ENCODE measurements at regions of chr11 and their contacts with region 1.

Region 1: DNA sequence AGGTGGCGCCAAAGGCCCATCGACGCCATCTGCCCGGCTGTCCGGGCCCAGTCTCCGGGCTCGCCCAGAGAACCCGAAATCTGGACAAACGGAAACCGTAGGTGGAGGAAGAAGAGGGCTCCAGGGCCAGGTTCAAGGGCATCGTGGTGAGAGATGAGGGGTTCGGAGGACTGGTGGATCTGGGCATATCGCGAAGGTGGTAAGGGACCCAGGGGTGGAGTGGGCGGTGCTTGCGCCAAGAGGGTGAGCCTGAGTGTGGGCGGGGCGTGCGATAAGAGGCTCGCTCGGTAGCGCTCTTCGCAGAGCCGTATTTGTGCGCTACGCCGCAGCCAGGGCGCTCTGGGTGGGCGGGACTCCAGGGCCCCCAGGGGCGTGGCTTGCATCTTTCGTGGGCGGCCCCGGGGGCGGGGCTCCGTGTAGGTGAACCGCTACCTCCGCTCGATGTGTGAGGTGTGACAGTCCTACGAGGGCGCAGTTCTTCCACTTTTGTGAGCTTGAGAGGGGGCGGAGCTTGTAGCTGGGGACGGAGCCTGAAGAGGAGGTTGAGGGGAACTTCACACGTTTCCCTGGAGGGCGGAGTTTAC is 4.8 kb downstream of the CD248 start:
- DNase-seq: peak; percentile 78
- ATAC-seq: peak; percentile 93
- H3K4me3 ChIP-seq: peak overlapping the region; percentile 66
- H3K27ac ChIP-seq: peak overlapping the region; percentile 55; the same call in 1 of the 2 replicates
- H3K4me1 ChIP-seq: no peaks in the 10 kb centered on the region; the same call in 1 of the 2 replicates
- H3K27me3 ChIP-seq: no peaks in the 10 kb centered on the region; a peak in 1 of 4 replicates
- CTCF ChIP-seq: peak in 2 of 3 experiments; percentile 91 to 94; a peak in 4 of 6 replicates
- EP300 ChIP-seq: no peak
- POLR2A ChIP-seq: peak; percentile 56; the same call in 1 of the 2 replicates
- RAD21 ChIP-seq: peak; percentile 94

Region 2: DNA sequence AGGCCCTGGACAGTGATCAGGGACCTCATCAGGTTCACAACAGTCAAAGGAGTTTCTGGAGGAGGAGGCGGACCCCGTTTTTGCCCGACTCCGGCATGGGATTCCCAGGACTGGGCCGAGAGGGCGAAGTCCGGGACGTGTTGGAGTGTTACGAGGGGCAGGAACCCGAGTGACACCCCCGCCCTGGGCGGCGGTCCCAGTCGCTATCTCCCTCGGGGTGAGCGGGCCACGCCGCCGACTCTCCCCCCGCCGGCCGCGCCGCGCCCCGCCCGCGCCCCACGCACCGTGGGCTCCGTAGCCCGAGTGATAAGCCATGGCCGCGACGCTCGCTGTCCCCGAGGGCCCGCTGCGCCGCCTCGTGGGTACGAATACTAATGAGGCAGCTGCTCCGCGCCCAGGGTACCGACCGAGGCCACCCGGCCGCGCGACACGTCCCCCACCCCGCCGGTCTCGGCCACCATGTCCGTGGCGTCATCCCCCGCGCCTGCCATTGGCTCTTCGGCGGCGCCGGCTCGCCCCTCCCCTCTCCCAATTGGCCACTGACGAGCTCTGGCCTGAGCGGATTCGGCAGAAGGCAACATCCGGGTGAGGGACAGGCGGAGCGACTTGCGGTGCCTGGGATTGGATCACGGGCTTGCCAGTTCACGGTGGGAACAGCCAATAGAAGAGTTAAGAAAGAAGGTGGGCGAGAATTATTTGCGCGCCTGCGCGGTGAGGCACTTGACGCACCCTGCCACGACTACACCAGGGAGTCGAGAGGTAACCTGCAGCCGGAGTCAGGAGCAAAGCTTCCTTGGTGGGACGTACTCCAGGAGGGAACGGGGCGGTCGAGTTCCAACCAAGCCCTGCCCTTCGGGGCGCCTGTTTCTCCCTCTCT is 23.1 kb before region 1 on chr11 and contains the start of gene YIF1A:
- CTCF ChIA-PET with region 1: interaction called, 21 read pairs
- POLR2A ChIA-PET with region 1: interaction called, 14 read pairs
- RAD21 ChIA-PET with region 1: interaction called, 28 read pairs
- SMC1A ChIA-PET with region 1: interaction called, 10 read pairs
- in situ Hi-C with region 1: no loop called
- intact Hi-C with region 1: no loop called
- DNase-seq: peak; percentile 98
- ATAC-seq: peak; percentile 97
- H3K4me3 ChIP-seq: peak within 1 kb of the TSS; percentile 83
- H3K27ac ChIP-seq: peak within 1 kb of the TSS; percentile 87
- H3K4me1 ChIP-seq: peaks cover 15% of the 10 kb centered on the region
- H3K27me3 ChIP-seq: peaks cover 2 to 7% of the 10 kb centered on the region in 2 experiments; a peak in 2 of 4 replicates
- CTCF ChIP-seq: peak in 1 of 3 experiments; percentile 16; a peak in 2 of 6 replicates
- EP300 ChIP-seq: no peak
- POLR2A ChIP-seq: peak; percentile 90
- RAD21 ChIP-seq: no peak
- polyA plus RNA-seq, gene YIF1A: 6.6 to 17.5 TPM

Region 3: DNA sequence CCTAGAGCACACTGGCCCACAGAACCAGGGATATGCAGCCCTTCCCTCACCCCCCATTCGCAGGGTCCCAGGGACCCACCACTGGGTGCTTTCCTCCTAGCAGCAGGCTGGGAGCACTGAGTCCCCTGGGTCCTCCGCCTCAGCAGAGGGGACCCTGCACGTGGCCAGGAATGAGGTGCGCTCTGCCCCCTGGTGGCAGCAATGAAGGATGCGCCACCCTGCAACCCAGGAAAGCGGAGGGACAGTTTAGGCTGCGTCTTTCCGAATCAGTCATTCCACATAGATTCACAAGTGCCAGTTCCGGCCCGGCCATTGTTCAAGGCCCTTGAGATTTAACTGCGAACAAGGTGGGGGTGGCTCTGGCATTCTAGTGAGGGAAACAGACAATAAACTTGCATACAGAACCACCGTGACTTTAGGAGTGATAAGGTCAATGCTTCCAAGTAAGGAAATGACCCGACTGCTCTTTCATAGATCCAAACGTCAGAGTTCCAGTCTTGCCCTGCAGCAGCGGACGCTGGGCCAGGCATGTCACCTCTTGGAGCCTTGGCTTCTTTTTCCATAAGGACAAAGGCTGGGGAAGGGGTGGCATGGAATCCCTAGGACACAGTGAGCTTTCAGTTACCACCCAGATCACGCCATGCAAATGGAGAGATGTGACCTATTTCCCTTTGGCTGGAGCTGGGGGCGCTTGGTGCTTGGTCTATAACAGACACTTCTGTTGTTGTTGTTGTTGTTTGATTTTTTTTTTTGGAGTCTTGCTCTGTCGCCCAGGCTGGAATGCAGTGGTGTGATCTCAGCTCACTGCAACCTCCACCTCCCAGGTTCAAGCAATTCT is 16.5 kb after region 1 on chr11:
- CTCF ChIA-PET with region 1: interaction called, 96 read pairs
- POLR2A ChIA-PET with region 1: interaction called, 4 read pairs
- RAD21 ChIA-PET with region 1: interaction called, 49 read pairs
- SMC1A ChIA-PET with region 1: interaction called, 33 read pairs
- in situ Hi-C with region 1: no loop called
- intact Hi-C with region 1: loop called (anchors 1 kb)
- DNase-seq: no peak
- ATAC-seq: peak; percentile 97
- H3K4me3 ChIP-seq: no peak overlapping the region
- H3K27ac ChIP-seq: no peak overlapping the region
- H3K4me1 ChIP-seq: peaks cover 10% of the 10 kb centered on the region; the same call in 1 of the 2 replicates
- H3K27me3 ChIP-seq: no peaks in the 10 kb centered on the region; a peak in 1 of 4 replicates
- CTCF ChIP-seq: peak; percentile 91 to 94 (median 92)
- EP300 ChIP-seq: no peak
- POLR2A ChIP-seq: no peak
- RAD21 ChIP-seq: peak; percentile 81

Region 4: GRCh38 chr11:66344550-66345315 is 32.7 kb after region 1 on chr11 and contains the start of gene BRMS1:
- CTCF ChIA-PET with region 1: interaction called, 44 read pairs
- POLR2A ChIA-PET with region 1: interaction called, 19 read pairs
- RAD21 ChIA-PET with region 1: interaction called, 10 read pairs
- SMC1A ChIA-PET with region 1: interaction called, 4 read pairs
- in situ Hi-C with region 1: no loop called
- intact Hi-C with region 1: loop called (anchors 2 kb)
- DNase-seq: peak; percentile 79
- ATAC-seq: peak; percentile 87
- H3K4me3 ChIP-seq: peak within 1 kb of the TSS; percentile 87
- H3K27ac ChIP-seq: peak within 1 kb of the TSS; percentile 57
- H3K4me1 ChIP-seq: peaks cover 17% of the 10 kb centered on the region
- H3K27me3 ChIP-seq: no peaks in the 10 kb centered on the region
- CTCF ChIP-seq: peak in 2 of 3 experiments; percentile 13 to 16; a peak in 1 of 6 replicates
- EP300 ChIP-seq: peak in 1 of 2 experiments; percentile 35; a peak in 2 of 4 replicates
- POLR2A ChIP-seq: peak; percentile 98
- RAD21 ChIP-seq: no peak
- polyA plus RNA-seq, gene BRMS1: 2.1 to 8.6 TPM

Region 5: DNA sequence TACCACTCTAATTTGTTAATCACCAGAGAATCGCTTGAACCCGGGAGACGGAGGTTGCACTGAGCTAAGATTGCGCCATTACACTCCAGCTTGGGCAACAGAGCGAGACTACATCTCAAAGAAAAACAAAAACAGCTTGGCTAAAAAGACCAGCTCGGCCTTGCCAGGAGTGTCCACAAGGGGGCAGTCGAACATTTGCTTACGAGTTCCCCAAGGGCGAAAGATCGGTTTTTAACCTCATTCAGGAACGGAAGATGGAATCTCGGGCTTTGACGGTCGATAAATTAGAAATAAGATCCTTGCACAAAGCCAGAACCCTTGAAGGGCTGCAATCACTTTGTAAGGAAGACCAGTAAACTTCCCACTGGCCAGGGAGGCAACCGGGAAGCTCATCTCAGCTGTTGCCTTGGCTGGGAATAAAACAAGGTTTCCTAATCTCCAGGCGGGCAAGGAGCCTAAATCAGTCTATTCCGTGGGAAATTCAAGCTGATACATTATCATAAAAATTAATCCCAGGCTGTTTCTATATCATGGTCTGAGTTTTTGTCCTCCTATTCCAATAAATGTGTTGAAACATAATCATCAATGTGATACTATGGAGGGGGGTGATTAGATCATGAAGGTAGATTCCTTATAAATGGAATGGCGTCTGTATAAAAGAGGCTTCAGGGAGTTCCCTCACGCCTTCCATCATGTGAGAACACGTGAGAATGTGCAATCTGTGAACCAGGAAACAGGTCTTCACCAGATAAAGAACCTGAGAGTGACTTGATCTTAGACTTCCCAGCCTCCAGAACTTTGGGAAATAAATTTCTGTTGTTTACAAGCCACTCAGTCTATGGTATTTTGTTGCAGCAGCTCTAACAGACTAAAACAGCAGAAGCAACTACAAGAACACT is 74.4 kb after region 1 on chr11:
- CTCF ChIA-PET with region 1: interaction called, 166 read pairs
- POLR2A ChIA-PET with region 1: interaction called, 5 read pairs
- RAD21 ChIA-PET with region 1: interaction called, 49 read pairs
- SMC1A ChIA-PET with region 1: interaction called, 27 read pairs
- in situ Hi-C with region 1: no loop called
- intact Hi-C with region 1: loop called (anchors 2 kb)
- DNase-seq: peak; percentile 41
- ATAC-seq: peak; percentile 93
- H3K4me3 ChIP-seq: no peak overlapping the region
- H3K27ac ChIP-seq: no peak overlapping the region
- H3K4me1 ChIP-seq: peaks cover 2% of the 10 kb centered on the region; the same call in 1 of the 2 replicates
- H3K27me3 ChIP-seq: no peaks in the 10 kb centered on the region
- CTCF ChIP-seq: peak; percentile 84 to 98 (median 94)
- EP300 ChIP-seq: no peak
- POLR2A ChIP-seq: no peak
- RAD21 ChIP-seq: peak; percentile 62

Region 6: GRCh38 chr11:66473167-66473566 is 161.1 kb after region 1 on chr11:
- CTCF ChIA-PET with region 1: no interaction called
- POLR2A ChIA-PET with region 1: no interaction called
- RAD21 ChIA-PET with region 1: no interaction called
- SMC1A ChIA-PET with region 1: no interaction called
- in situ Hi-C with region 1: no loop called
- intact Hi-C with region 1: no loop called
- DNase-seq: no peak
- ATAC-seq: no peak
- H3K4me3 ChIP-seq: no peak overlapping the region
- H3K27ac ChIP-seq: no peak overlapping the region
- H3K4me1 ChIP-seq: no peaks in the 10 kb centered on the region
- H3K27me3 ChIP-seq: no peaks in the 10 kb centered on the region
- CTCF ChIP-seq: no peak
- EP300 ChIP-seq: no peak
- POLR2A ChIP-seq: no peak
- RAD21 ChIP-seq: no peak